GM10248 (cell line): ENCODE measurements at regions of chr6 and their contacts with region 1.

Region 1: GRCh38 chr6:149484733-149485700 is at the start of gene ZC3H12D:
- DNase-seq: no peak
- CTCF ChIP-seq: peak; percentile 39

Region 2: GRCh38 chr6:149473080-149474052 is 11.7 kb before region 1 on chr6:
- CTCF ChIA-PET with region 1: interaction called, 26 read pairs
- POLR2A ChIA-PET with region 1: interaction called, 4 read pairs
- DNase-seq: no peak
- CTCF ChIP-seq: peak; percentile 20